Caco-2 (cell line): ENCODE measurements at regions of chr3 and their contacts with region 1.

Region 1: GRCh38 chr3:46935168-46935858 is 41.2 kb downstream of the CCDC12 start:
- DNase-seq: peak; percentile 84 to 90
- H3K4me3 ChIP-seq: no peak overlapping the region
- H3K4me3 Mint-ChIP-seq: peak overlapping the region; percentile 24
- H3K27ac Mint-ChIP-seq: peak overlapping the region; percentile 69
- H3K4me1 ChIP-seq: peaks cover 82% of the 10 kb centered on the region
- H3K4me1 Mint-ChIP-seq: peaks cover 56% of the 10 kb centered on the region
- H3K27me3 ChIP-seq: no peaks in the 10 kb centered on the region
- H3K27me3 Mint-ChIP-seq: no peaks in the 10 kb centered on the region
- CTCF ChIP-seq: peak; percentile 35 to 70

Region 2: DNA sequence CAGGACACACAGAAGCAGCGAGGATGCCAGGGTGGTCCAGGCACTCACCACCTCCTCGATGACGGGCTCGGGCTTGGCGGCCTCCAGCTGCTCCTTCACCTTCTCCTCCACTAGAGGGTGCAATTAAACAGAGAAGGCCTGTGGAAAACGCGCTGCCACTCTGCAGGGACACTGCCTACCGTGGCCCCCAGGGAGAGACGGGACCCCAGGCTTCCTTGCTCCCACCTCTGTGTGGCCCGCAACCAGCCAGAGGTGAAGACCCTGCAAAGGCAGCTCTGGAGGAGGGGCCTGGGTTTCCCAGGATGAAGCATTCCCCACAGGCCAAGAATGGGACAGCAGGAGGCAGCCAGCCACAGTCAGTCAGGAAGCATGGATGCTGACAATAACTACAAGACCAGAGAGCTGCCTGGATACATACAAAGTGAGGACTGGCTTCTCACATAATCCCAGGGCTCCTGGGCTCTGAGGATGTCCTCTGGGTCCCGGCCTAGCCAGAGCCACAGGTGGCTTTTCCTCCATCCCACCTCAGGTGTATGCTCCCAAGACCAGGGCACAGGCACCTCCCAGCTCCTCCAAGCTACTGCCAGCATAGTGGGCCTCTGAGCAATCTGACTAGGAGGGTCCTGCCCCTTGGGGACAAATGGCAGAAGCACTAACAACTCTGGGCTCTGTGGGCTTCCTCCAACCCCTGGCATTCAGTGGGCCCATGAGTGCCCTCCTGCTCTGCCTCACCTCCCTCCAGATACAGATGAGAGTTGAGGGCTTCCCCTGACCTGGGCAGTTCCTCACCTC is 11.6 kb before region 1 on chr3:
- CTCF ChIA-PET with region 1: interaction called, 21 read pairs
- POLR2A ChIA-PET with region 1: no interaction called
- intact Hi-C with region 1: no loop called
- DNase-seq: peak; percentile 55 to 69
- H3K4me3 ChIP-seq: no peak overlapping the region
- H3K4me3 Mint-ChIP-seq: no peak overlapping the region
- H3K27ac Mint-ChIP-seq: peak overlapping the region; percentile 57
- H3K4me1 ChIP-seq: 0 out of 2 replicates have a peak, but pooled peaks cover 4% of the 10 kb centered on the region
- H3K4me1 Mint-ChIP-seq: peaks cover 3% of the 10 kb centered on the region
- H3K27me3 ChIP-seq: no peaks in the 10 kb centered on the region
- H3K27me3 Mint-ChIP-seq: no peaks in the 10 kb centered on the region
- CTCF ChIP-seq: peak; percentile 61 to 83

Region 3: DNA sequence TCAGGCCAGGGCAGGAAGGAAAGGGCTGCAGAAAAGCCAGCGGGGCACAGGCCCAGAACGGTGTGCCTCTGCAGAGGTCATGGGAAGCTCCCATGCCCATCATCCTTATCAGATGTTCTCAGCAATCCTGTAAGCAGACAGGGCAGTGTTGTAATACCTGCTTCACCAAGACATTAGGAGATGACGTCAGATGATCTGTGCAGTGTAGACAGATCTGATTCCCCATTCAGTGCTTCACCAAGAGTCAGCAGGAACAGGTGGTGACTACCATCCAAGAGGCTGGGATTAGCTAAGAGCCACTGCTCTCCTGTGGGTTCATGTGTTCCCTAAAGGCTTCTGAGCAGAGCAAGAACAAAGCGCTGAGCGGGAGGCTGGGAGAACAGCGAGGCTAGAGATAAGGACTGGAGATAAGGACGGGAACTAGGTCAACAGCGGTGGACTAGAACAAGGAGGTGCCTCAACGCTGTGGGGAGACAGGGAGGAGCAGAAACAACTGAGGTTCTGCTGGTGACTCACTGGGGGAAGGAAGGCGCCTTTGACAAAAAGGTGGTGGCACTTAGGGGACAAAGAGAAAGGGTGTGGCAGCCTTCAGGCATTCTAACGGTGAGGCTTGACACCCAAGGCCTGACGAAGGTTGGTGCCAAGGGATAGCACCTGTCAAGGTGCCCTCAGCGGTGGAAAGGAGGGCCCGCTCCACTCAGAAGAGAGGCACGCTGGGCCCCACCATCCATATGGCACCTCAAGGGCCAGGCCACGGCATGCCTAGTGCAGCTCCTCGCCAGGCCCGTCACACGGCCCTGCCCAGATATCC is 12.9 kb after region 1 on chr3:
- CTCF ChIA-PET with region 1: interaction called, 19 read pairs
- POLR2A ChIA-PET with region 1: interaction called, 6 read pairs
- intact Hi-C with region 1: loop called (anchors 1 kb)
- DNase-seq: peak; percentile 90 to 96
- H3K4me3 ChIP-seq: no peak overlapping the region
- H3K4me3 Mint-ChIP-seq: peak overlapping the region; percentile 57
- H3K27ac Mint-ChIP-seq: peak overlapping the region; percentile 95
- H3K4me1 ChIP-seq: peaks cover 64% of the 10 kb centered on the region
- H3K4me1 Mint-ChIP-seq: peaks cover 65% of the 10 kb centered on the region
- H3K27me3 ChIP-seq: no peaks in the 10 kb centered on the region
- H3K27me3 Mint-ChIP-seq: no peaks in the 10 kb centered on the region
- CTCF ChIP-seq: no peak

Region 4: GRCh38 chr3:46959161-46959511 is 23.8 kb after region 1 on chr3:
- CTCF ChIA-PET with region 1: interaction called, 10 read pairs
- POLR2A ChIA-PET with region 1: no interaction called
- intact Hi-C with region 1: no loop called
- DNase-seq: no peak
- H3K4me3 ChIP-seq: no peak overlapping the region
- H3K4me3 Mint-ChIP-seq: no peak overlapping the region
- H3K27ac Mint-ChIP-seq: peak overlapping the region; percentile 73
- H3K4me1 ChIP-seq: peaks cover 76% of the 10 kb centered on the region
- H3K4me1 Mint-ChIP-seq: peaks cover 54% of the 10 kb centered on the region
- H3K27me3 ChIP-seq: no peaks in the 10 kb centered on the region
- H3K27me3 Mint-ChIP-seq: no peaks in the 10 kb centered on the region
- CTCF ChIP-seq: no peak

Region 5: DNA sequence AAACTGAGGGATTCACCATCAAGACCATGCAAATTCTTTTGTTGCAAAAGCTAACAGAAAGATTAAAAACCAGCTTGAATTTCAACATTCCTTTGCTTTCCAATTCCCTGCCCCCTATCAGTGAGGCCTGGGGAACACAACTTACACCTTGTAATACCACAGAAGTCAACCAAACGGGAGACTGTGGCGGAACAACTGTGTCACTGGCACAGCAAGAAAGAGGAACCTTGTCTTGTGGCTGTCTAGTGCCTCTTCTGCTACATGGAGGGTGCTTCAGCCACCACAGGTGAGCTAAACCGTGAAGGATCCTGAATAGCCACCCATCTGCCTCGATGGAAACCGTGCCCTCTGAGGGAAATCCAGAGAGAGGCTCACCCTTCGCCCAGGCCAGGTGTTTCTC is 29.8 kb after region 1 on chr3:
- CTCF ChIA-PET with region 1: interaction called, 15 read pairs
- POLR2A ChIA-PET with region 1: no interaction called
- intact Hi-C with region 1: no loop called
- DNase-seq: peak in 1 of 2 experiments; percentile 55
- H3K4me3 ChIP-seq: no peak overlapping the region
- H3K4me3 Mint-ChIP-seq: no peak overlapping the region
- H3K27ac Mint-ChIP-seq: peak overlapping the region; percentile 70
- H3K4me1 ChIP-seq: peaks cover 66% of the 10 kb centered on the region
- H3K4me1 Mint-ChIP-seq: peaks cover 49% of the 10 kb centered on the region
- H3K27me3 ChIP-seq: no peaks in the 10 kb centered on the region
- H3K27me3 Mint-ChIP-seq: no peaks in the 10 kb centered on the region
- CTCF ChIP-seq: no peak

Region 6: GRCh38 chr3:47342151-47342550 is 406.8 kb after region 1 on chr3:
- CTCF ChIA-PET with region 1: no interaction called
- POLR2A ChIA-PET with region 1: no interaction called
- intact Hi-C with region 1: no loop called
- DNase-seq: no peak
- H3K4me3 ChIP-seq: no peak overlapping the region
- H3K4me3 Mint-ChIP-seq: peak overlapping the region; percentile 27
- H3K27ac Mint-ChIP-seq: peak overlapping the region; percentile 77
- H3K4me1 ChIP-seq: peaks cover 13% of the 10 kb centered on the region; the same call in 1 of the 2 replicates
- H3K4me1 Mint-ChIP-seq: peaks cover 12% of the 10 kb centered on the region
- H3K27me3 ChIP-seq: no peaks in the 10 kb centered on the region
- H3K27me3 Mint-ChIP-seq: no peaks in the 10 kb centered on the region
- CTCF ChIP-seq: no peak